ENCODE measurements at regions of chr9 and their contacts with region 1.

Region 1: DNA sequence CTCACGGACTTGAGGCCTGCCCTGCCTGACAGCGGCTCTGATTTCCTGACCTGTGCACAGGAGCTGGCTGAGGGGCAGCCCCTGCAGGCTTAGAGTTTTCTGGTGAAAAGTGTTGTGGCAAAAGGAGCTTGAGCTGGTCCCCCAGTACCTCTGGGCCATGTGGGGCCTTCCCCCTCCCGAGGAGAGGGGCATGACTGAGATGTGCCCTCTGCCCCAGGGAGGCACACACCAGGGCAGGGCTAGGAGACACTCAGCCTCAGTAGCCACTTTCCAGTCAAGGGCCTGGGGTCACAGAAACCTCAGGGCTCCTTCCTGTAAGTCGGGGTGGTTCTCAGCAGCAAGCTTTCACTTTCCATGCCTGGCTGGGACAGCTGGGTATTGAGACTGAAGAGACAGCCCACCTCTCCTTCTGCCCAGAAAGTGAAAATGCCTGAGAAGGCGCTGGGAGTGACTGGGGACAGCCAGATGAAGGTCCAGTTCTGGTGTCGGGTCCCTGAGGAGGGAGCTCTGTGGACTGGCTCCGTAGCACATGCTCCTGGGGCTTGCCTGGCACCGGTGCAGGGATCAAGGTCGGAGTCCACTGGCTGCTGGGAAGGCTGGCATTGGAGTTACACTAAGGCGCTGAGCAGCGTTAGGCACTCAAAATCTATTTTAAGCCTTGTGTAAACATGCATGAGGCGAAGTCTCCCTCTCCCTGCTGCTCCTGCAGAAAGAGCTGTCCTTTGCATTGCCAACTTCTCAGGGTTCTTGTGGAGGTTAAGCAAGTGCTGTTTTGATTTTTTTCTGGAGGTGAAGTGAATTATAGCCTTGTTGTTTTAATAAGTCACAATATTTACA is 394.9 kb downstream of the GADD45G start:
- DNase-seq: peak; percentile 87 to 89
- ATAC-seq: peak; percentile 84
- H3K4me3 ChIP-seq: no peak overlapping the region
- H3K27ac ChIP-seq: peak overlapping the region in 1 of 2 donors; percentile 83
- H3K4me1 ChIP-seq: peaks cover 8 to 10% of the 10 kb centered on the region in 2 donors
- H3K27me3 ChIP-seq: no peaks in the 10 kb centered on the region

Region 2: DNA sequence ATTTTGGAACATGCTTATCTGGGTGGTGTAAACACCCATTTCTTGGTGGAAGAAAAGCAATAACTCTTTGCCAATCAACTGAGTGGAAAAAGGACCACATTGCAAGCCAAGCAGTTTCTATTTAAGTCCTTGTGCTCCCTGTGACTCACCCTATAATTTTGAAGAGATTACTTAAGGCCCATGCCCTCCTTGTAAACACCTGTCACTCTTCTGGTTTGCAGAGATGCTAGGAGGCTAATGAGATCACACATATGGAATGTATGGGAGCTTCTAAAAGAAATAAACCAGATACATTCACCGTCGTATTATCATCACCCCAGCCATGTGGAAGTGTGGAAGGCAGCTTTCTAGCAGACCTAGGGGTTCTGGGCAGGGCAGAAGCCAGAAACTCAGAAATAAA is 57.9 kb before region 1 on chr9:
- intact Hi-C with region 1: loop called in 1 of 2 experiments (anchors 5 kb)
- DNase-seq: no peak
- ATAC-seq: peak; percentile 82
- H3K4me3 ChIP-seq: no peak overlapping the region
- H3K27ac ChIP-seq: peak overlapping the region in 1 of 2 donors; percentile 78
- H3K4me1 ChIP-seq: no peaks in the 10 kb centered on the region
- H3K27me3 ChIP-seq: no peaks in the 10 kb centered on the region

Measured in aorta (tissue), 5 donors.